GM12878 (cell line): ENCODE measurements at regions of chr13 and their contacts with region 1.

Region 1: DNA sequence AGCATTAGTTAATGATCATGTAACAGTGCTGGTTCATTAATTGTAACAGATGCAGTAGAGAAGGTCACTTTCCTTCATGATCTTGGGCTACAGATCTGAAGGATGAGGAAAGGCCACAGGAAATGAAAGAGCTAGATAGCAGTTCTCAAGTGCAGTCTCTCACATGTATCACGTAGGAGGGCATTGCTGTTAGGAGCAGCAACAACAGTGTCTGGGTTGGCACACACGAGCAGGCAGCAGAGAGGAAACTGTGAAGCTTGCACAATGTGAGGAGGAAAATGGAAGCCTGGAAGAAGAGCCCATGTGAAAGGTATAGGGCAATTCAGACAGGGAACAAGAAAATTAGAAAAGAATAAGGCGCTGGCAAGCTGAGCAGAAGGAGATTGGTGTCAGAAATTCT is 1741.5 kb downstream of the PCDH9 start:
- DNase-seq: no peak
- ATAC-seq: peak; percentile 84
- H3K4me3 ChIP-seq: no peak overlapping the region
- H3K27ac ChIP-seq: no peak overlapping the region
- H3K4me1 ChIP-seq: no peaks in the 10 kb centered on the region
- H3K27me3 ChIP-seq: no peaks in the 10 kb centered on the region
- CTCF ChIP-seq: no peak
- EP300 ChIP-seq: no peak
- POLR2A ChIP-seq: no peak
- RAD21 ChIP-seq: no peak

Region 2: GRCh38 chr13:65387743-65388347 is 100.8 kb before region 1 on chr13:
- CTCF ChIA-PET with region 1: no interaction called
- POLR2A ChIA-PET with region 1: no interaction called
- RAD21 ChIA-PET with region 1: no interaction called
- SMC1A ChIA-PET with region 1: no interaction called
- in situ Hi-C with region 1: no loop called
- intact Hi-C with region 1: no loop called
- DNase-seq: no peak
- ATAC-seq: no peak
- H3K4me3 ChIP-seq: no peak overlapping the region
- H3K27ac ChIP-seq: no peak overlapping the region
- H3K4me1 ChIP-seq: no peaks in the 10 kb centered on the region
- H3K27me3 ChIP-seq: no peaks in the 10 kb centered on the region
- CTCF ChIP-seq: no peak
- EP300 ChIP-seq: no peak
- POLR2A ChIP-seq: no peak
- RAD21 ChIP-seq: no peak

Region 3: GRCh38 chr13:65456177-65456912 is 32.3 kb before region 1 on chr13:
- CTCF ChIA-PET with region 1: no interaction called
- POLR2A ChIA-PET with region 1: no interaction called
- RAD21 ChIA-PET with region 1: no interaction called
- SMC1A ChIA-PET with region 1: interaction called, 10 read pairs
- in situ Hi-C with region 1: no loop called
- intact Hi-C with region 1: no loop called
- DNase-seq: no peak
- ATAC-seq: peak; percentile 12; the same call in 1 of the 3 replicates
- H3K4me3 ChIP-seq: no peak overlapping the region
- H3K27ac ChIP-seq: no peak overlapping the region
- H3K4me1 ChIP-seq: no peaks in the 10 kb centered on the region
- H3K27me3 ChIP-seq: no peaks in the 10 kb centered on the region
- CTCF ChIP-seq: no peak
- EP300 ChIP-seq: no peak
- POLR2A ChIP-seq: no peak
- RAD21 ChIP-seq: no peak